Mammary epithelial cell (primary cell): ENCODE measurements at regions of chr4 and their contacts with region 1.

Region 1: DNA sequence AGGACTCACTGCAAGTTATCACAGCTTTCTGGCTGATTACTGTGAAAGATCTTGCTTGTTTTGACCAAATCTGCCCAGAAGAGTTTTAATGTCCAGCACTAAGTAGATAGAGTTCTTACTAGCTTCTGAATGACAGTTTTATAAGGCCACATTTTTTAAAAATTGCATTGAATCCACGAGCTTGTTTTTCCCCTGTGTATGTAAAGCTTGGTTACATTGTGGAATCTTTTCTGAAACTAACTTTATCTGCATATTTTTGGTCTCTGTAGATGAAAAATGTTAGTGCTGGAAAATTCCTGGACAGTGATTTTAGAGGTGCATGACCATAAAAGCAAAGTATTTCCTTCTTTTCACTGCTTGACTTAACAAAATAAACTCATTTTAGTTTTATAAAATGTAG is 650.3 kb upstream of the FAM241A start:
- DNase-seq: no peak
- H3K4me3 ChIP-seq: no peak overlapping the region
- H3K27ac ChIP-seq: no peak overlapping the region
- H3K4me1 ChIP-seq: no peaks in the 10 kb centered on the region
- H3K27me3 ChIP-seq: no peaks in the 10 kb centered on the region
- CTCF ChIP-seq: no peak

Region 2: DNA sequence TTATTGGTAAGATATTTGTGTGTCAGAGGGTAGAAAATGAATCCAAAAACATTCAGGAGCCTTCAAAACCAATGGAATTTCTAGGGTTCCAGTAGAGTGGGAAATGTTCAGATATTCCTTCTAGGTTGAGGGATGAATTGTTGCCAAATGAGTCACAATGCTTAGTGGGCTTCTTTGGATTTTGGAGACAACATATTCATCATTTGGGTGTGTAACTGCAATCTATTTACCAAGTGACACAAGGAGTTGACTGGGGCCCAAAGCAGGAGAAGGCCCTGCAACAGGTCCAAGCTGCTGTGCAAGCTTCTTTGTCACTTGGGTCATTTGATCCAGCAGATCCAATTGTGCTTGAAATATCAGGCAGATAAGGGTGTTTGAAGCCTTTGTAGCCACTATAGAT is 320.6 kb before region 1 on chr4:
- CTCF ChIA-PET with region 1: no interaction called
- dilution Hi-C with region 1: no loop called
- in situ Hi-C with region 1: no loop called
- intact Hi-C with region 1: loop called (anchors 10 kb)
- DNase-seq: no peak
- H3K4me3 ChIP-seq: no peak overlapping the region
- H3K27ac ChIP-seq: no peak overlapping the region
- H3K4me1 ChIP-seq: no peaks in the 10 kb centered on the region
- H3K27me3 ChIP-seq: no peaks in the 10 kb centered on the region
- CTCF ChIP-seq: no peak